Activated CD4-positive, alpha-beta memory T cell treated with anti-CD3 and anti-CD28 coated beads, Interleukin-2, amount 10 ng/mL, durations not matched to agents 7 days and 5 days (primary cell): ENCODE measurements at regions of chr17 and their contacts with region 1.

Region 1: DNA sequence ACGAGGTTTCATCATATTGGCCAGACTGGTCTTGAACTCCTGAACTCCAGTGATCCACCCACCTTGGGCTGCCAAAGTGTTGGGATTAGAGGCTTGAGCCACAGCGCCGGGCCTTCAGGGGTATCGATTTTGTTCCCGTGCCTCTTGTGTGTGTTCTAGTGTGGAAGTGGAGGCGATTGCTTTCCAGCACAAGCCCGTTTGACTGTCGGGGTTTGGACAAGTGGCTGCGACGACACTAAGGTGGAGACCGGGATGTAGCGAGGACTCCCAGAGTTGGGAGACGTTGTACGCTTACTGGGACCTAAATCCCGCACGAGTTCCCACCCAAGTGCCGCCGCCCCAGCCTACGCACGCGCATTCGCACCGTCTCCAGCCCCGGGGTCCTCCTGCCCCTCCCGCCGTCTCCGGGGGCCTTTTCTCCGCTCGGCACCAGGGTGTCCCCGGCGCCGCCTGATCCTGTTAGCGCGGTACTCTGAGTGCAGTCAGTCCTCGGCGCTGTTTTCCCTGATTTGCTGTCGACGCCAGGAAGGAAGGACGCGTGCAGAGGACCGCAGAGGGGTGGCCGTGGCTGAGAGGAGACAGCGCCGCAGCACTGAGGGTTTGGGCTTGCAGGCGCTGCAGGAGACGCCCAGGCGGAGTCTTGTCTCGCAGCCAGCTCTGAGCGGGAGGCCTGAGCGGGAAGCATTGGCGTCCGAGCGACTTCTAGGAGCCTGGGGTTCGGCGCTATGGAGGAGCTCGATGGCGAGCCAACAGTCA is at the start of gene NUP85:
- DNase-seq: peak; percentile 91
- H3K4me3 Mint-ChIP-seq: peak within 1 kb of the TSS; percentile 86
- H3K27ac Mint-ChIP-seq: peak within 1 kb of the TSS; percentile 97
- H3K4me1 Mint-ChIP-seq: peaks cover 36% of the 10 kb centered on the region
- H3K27me3 Mint-ChIP-seq: no peaks in the 10 kb centered on the region
- total RNA-seq, gene NUP85: 109 to 116 TPM

Region 2: DNA sequence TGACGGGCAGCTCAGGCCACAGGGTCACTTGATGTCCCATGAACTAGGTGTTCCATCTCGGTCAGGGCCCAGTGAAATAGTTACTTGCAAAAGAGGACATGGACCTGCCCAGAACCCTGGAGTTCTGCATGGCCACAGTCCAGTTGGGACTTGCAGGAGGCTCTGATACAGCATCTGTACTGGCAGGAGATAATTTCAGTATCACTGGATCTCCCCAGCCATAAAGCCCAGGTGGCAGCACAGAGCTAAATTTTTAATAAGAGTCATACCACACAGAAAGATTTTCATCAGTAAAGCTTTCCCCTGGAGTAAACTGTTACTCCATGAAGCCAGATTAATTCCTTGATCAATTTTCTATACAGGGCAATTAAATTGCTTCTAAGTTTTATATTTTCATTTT is 135.4 kb before region 1 on chr17:
- CTCF ChIA-PET with region 1: interaction called, 12 read pairs
- POLR2A ChIA-PET with region 1: no interaction called
- DNase-seq: no peak
- H3K4me3 Mint-ChIP-seq: no peak overlapping the region
- H3K27ac Mint-ChIP-seq: no peak overlapping the region
- H3K4me1 Mint-ChIP-seq: peaks cover 38% of the 10 kb centered on the region
- H3K27me3 Mint-ChIP-seq: no peaks in the 10 kb centered on the region

Region 3: GRCh38 chr17:75138519-75138918 is 66.7 kb before region 1 on chr17:
- CTCF ChIA-PET with region 1: no interaction called
- POLR2A ChIA-PET with region 1: no interaction called
- DNase-seq: no peak
- H3K4me3 Mint-ChIP-seq: no peak overlapping the region
- H3K27ac Mint-ChIP-seq: no peak overlapping the region
- H3K4me1 Mint-ChIP-seq: peaks cover 33% of the 10 kb centered on the region
- H3K27me3 Mint-ChIP-seq: no peaks in the 10 kb centered on the region

Region 4: DNA sequence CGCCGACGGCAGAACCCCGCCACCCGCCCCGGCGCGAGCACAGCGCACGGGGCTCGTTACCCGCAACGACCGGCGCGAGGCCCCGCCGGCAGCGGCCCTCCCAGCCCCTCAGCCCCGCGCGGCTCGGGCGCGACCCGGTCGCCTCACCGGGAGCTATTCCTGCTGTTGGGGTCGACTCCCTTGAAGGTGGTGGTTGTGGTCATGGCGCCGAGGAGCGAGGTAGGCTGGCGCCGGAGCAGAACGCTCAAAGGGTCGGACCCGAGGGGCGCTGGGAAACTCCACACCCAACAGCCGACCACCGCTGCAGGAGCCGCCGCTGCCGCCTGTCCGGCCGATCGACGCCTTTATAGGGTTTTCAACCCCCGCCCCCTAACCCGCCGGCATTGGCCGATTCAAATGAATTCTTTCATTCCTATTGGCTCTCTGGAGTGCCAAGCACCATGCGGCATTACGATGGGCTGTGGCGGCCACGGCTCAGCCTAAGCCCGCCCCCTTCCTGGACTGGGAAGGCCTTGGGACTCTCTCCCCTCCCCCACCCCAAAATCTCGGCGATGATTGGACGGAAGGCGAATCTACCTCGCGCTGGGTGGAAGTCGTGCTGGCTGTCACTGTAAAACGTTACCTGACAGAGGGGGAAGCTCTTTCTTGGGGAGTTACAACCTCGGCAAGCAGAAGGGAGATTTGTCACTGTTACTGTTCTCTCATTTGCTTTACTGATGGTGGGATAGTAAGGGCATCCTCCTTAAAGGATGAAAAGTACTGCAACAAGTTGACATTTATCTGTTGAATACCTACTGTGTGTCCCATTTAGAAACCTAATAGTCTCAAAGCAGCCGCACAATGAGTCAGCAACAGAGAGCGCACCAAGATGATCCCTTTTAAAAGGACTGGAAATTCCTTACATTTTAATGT is 50.8 kb before region 1 on chr17 and contains the start of gene JPT1:
- CTCF ChIA-PET with region 1: interaction called, 4 read pairs
- POLR2A ChIA-PET with region 1: interaction called, 12 read pairs
- DNase-seq: peak; percentile 99
- H3K4me3 Mint-ChIP-seq: peak within 1 kb of the TSS; percentile 93
- H3K27ac Mint-ChIP-seq: peak within 1 kb of the TSS; percentile 86
- H3K4me1 Mint-ChIP-seq: peaks cover 41% of the 10 kb centered on the region
- H3K27me3 Mint-ChIP-seq: no peaks in the 10 kb centered on the region
- total RNA-seq, gene JPT1: 305 to 329 TPM

Region 5: DNA sequence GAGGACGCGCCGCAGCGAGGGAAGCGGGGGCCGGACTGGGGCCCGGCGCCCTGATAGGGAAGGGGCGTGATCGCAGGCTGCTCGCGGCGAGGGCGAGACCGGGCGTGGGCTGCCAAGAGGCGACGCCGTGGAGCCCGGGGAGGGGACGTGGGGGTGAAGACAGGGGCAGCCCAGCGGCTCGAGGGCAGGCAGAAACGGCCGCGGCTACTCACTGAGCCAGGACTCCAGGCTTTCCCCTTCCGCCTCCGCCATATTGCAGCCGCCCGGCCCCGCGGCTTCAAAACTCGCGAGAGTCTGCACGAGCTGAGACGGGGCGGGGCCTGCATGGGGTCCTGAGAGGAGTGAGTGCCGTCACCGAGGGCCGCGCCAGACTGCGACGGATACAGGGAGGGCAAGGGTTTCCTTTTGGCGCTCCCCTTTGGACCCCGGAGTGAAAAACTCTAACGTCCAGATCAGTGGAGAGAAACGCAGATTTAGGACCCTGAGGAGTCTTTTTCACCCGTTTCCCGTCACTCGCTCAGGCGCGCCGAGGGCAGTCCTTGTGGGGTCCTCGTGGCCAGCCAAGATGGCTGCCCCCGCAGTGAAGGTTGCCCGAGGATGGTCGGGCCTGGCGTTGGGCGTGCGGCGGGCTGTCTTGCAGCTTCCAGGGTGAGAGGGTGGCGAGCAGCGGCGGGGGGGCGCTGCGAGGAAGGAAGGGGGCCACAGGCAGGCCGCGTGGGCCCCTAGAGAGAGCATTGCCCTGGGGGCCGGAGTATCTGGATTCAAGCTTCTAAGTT is 56.3 kb after region 1 on chr17 and contains the starts of genes GGA3 and MRPS7:
- CTCF ChIA-PET with region 1: interaction called, 3 read pairs
- POLR2A ChIA-PET with region 1: interaction called, 43 read pairs
- DNase-seq: peak; percentile 96
- H3K4me3 Mint-ChIP-seq: peak within 1 kb of the TSS; percentile 96
- H3K27ac Mint-ChIP-seq: peak within 1 kb of the TSS; percentile 99
- H3K4me1 Mint-ChIP-seq: peaks cover 53% of the 10 kb centered on the region
- H3K27me3 Mint-ChIP-seq: no peaks in the 10 kb centered on the region
- total RNA-seq, gene GGA3: 73.4 to 79.4 TPM
- total RNA-seq, gene MRPS7: 39.7 to 40.0 TPM